ENCODE measurements at regions of chr6 and their contacts with region 1.

Region 1: DNA sequence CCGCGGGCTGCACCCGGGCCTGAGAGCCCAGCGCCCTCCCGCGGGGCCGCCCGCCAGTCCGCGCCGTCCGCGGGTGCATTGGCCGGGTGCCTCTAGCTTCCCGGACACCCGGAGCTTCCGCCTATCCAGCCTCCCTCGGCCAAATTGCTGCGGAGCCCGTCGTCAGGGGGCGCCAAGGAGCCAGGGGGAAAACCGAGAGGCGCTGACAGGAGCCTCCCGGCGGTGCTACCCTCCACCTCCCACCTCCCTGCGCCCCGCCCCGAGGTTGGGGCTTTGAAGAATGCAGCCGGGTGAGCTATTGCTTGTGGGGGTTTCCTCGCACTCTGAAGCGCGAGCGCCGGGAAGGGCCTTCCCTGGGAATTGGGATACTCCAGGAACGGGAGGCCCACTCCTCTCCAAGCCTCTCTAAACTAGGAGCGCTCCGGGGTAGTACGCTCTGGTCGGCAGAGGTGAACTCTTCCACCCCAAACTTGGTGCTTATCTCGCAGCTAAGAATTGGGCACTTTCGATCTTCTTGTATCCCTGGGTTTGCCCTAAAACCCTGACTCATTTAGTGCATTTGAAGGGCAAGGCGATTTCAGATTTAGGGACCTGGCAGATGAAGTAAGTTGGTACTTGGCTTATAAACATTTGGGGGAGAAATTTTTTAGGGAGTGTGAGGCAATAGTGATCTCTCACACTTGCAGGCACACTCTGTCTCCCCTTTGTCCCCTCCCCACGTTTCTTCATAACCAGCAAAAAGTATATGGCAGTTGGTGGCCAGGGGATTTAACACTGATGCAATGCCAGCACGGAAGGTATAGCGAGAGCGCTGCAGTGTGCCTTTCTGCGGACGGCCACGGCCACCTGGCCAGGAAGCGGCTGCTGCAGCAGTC is 501 bp downstream of the BEND6 start:
- DNase-seq: peak; percentile 90
- H3K4me3 Mint-ChIP-seq: peak overlapping the region; percentile 86
- H3K27ac Mint-ChIP-seq: peak overlapping the region; percentile 17
- H3K4me1 Mint-ChIP-seq: peaks cover 15% of the 10 kb centered on the region
- H3K27me3 Mint-ChIP-seq: peaks cover 62% of the 10 kb centered on the region

Region 2: DNA sequence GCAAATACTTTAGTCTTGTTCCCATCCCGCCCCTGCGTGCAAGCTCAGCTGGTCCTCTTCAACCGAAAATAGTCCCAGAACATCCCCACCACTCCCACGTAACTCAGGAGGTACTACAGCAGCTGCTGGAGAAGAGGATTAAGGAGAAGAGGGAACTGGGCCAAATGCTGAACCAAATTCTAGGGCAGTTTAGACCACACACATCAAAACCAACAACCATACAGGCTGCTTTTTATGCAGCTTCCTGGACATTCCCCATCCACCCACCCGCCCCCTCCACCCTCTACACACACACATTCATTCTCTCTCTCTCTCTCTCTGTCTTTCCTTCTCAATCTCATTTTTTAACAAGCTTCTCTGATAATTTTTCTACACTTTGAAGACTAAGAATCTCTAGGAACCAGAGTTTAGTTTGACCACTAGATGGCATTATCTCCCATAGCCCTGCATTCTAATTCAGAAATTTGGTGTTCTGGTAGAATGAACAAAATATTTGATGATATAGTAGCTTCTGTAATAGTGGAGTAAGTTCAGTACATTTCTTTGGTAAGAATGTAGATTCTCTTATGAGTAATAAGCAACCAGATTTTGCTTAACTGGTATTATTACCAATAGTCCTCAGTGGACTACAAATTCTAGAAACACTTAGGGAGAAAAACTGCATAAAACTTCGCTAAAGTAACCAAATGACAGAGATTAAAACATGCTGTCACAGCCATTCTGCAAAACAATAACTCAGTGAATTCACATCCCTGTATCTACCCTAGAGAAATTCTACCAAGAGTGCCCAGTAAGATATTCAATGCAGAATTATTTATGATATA is 52.6 kb before region 1 on chr6:
- intact Hi-C with region 1: loop called (anchors 5 kb)
- DNase-seq: no peak
- H3K4me3 Mint-ChIP-seq: no peak overlapping the region
- H3K27ac Mint-ChIP-seq: no peak overlapping the region
- H3K4me1 Mint-ChIP-seq: peaks cover 2% of the 10 kb centered on the region
- H3K27me3 Mint-ChIP-seq: peaks cover 17% of the 10 kb centered on the region

Region 3: DNA sequence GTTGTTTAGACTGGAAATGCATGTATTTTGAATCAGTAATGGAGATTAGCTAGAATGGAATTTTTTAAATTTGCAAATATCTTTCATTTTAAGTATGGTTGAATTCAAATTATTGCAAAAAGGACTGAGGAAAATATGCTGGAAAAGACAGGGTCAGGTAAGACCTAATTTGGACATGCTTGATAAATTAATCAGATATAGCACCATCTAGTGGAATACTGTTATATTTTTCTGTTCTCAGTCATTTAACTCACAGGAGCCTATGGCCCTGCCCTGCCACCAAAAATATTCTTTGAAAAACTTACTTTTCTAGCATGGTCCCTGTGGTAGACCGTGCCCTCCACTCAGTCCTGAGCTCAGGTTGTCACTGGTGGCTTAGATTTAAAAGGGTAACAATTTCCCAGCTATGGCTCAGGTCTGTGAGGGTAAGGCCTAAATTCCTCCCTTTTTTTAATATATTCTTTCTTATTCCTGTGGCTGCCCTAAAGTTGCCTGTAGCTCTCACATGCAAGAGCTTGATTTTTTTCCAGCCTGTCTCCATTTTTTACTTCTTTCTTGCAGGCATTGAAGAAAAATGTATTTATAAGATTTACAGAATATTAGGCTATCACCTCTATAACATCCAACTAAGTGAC is 65.8 kb after region 1 on chr6:
- intact Hi-C with region 1: loop called (anchors 5 kb)
- DNase-seq: no peak
- H3K4me3 Mint-ChIP-seq: no peak overlapping the region
- H3K27ac Mint-ChIP-seq: no peak overlapping the region
- H3K4me1 Mint-ChIP-seq: no peaks in the 10 kb centered on the region
- H3K27me3 Mint-ChIP-seq: peaks cover 19% of the 10 kb centered on the region

Region 4: GRCh38 chr6:57048577-57048976 is 93.2 kb after region 1 on chr6:
- intact Hi-C with region 1: loop called (anchors 5 kb)
- DNase-seq: no peak
- H3K4me3 Mint-ChIP-seq: peak overlapping the region; percentile 81
- H3K27ac Mint-ChIP-seq: no peak overlapping the region
- H3K4me1 Mint-ChIP-seq: peaks cover 21% of the 10 kb centered on the region
- H3K27me3 Mint-ChIP-seq: peaks cover 22% of the 10 kb centered on the region

Region 5: GRCh38 chr6:57089687-57090460 is 134.5 kb after region 1 on chr6 and contains the start of gene ZNF451:
- intact Hi-C with region 1: loop called (anchors 5 kb)
- DNase-seq: peak; percentile 99
- H3K4me3 Mint-ChIP-seq: peak within 1 kb of the TSS; percentile 70
- H3K27ac Mint-ChIP-seq: peak within 1 kb of the TSS; percentile 70
- H3K4me1 Mint-ChIP-seq: peaks cover 27% of the 10 kb centered on the region
- H3K27me3 Mint-ChIP-seq: no peaks in the 10 kb centered on the region
- total RNA-seq, gene ZNF451: 58.1 and 61.2 TPM in 2 replicates

Region 6: DNA sequence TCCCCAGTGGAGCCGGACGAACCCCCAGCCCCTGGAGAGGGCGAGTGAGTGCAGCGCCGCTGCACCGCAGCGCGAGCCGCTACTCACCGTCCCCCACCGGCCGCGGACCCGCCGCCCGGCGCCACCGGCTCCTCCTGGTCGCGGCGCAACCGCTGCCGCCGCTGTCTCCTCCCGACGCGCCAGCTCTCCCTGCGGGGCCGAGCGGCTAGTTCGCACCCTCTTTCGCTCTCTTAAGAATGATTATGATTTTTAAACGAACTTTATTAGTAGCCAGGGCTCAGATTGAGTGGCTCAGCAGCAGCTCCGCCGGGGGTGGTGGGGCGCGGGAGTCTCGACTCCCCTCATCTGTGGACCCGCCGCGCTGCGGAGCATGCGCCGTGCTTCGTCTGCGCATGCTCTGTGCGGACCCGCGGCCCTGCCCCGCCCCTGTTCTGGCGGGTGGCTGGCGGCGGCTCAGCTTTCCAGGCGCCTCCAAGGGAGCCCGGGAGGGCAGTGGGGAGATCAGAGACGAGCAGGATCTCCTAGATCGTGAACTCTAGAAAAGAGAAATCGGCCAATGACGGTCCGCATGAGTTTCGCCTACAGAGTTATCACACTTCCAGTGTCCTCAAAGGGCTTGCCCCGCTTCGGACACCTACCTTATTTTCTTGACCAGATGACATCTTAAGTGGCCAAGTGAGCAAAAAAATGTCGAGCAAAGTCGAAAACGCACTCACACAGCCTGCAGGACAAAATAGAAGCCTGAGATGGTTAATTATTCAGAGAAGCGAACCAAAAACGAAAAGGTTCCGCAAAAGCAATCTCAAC is 266.7 kb after region 1 on chr6 and contains the start of gene RAB23:
- intact Hi-C with region 1: loop called (anchors 5 kb)
- DNase-seq: peak; percentile 97
- H3K4me3 Mint-ChIP-seq: peak within 1 kb of the TSS; percentile 93
- H3K27ac Mint-ChIP-seq: peak within 1 kb of the TSS; percentile 92
- H3K4me1 Mint-ChIP-seq: peaks cover 13% of the 10 kb centered on the region
- H3K27me3 Mint-ChIP-seq: peaks cover 37% of the 10 kb centered on the region
- total RNA-seq, gene RAB23: 3.0 and 4.0 TPM in 2 replicates